Uterus (tissue), 4 donors: ENCODE measurements at regions of chr2 and their contacts with region 1.

Region 1: GRCh38 chr2:96760036-96760985 is at the start of gene CNNM4:
- DNase-seq: peak; percentile 93 to 94
- H3K4me3 ChIP-seq: peak within 1 kb of the TSS; percentile 50 to 63
- H3K27ac ChIP-seq: peak within 1 kb of the TSS; percentile 85 to 88
- H3K4me1 ChIP-seq: peaks cover 0 to 5% of the 10 kb centered on the region in 2 donors
- H3K27me3 ChIP-seq: no peaks in the 10 kb centered on the region
- CTCF ChIP-seq: peak in 1 of 4 experiments; percentile 32
- POLR2A ChIP-seq: peak; percentile 63 to 87
- total RNA-seq, gene CNNM4: 0.77 to 8.2 (median 4.7) TPM

Region 2: GRCh38 chr2:96816128-96816835 is 56.0 kb after region 1 on chr2 and contains the start of gene CNNM3:
- intact Hi-C with region 1: loop called (anchors 10 kb)
- DNase-seq: peak; percentile 95
- H3K4me3 ChIP-seq: peak within 1 kb of the TSS; percentile 59 to 93
- H3K27ac ChIP-seq: peak within 1 kb of the TSS; percentile 94 to 98
- H3K4me1 ChIP-seq: peaks cover 10 to 25% of the 10 kb centered on the region in 2 donors
- H3K27me3 ChIP-seq: no peaks in the 10 kb centered on the region
- CTCF ChIP-seq: peak; percentile 57 to 83 (median 71)
- POLR2A ChIP-seq: peak; percentile 77 to 89
- total RNA-seq, gene CNNM3: 1.5 to 21.1 (median 11.2) TPM

Region 3: DNA sequence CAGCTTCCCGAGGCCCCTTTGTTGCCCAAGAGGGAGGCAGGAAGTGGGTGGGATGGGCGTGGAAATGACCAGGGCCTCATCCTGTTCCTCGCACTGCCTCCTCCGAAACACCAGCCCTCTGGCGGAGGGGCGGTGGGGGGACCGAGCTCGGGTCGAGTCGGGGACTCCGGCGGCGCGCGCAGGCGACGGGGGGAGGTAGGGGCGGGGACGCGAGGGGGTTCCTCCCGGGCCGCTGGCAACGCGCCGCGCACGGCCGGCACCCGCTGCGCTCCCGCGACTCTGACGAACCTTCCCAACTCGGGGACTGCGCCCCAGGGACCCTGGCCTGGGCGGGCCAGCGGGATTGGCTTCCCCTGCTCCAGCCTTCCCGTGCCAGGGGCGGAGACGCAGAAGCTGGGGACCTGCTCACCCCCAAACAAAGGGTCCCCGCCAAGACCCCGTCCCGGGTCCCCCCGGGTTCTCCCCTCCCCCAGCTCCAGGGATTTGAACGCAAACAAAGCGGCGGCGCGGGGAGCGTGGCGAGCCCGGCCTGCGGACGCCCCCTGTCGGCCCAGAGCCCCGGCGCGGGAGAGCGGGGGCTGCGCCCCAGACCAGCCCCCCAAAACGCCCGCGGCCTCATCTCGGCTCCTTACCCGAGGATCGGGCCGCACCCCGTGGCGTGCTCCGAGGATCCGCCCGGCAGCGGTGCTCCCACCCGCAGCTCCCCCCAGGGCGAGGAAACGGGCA is 108.4 kb after region 1 on chr2:
- intact Hi-C with region 1: loop called (anchors 10 kb)
- DNase-seq: peak; percentile 87 to 91
- H3K4me3 ChIP-seq: peak overlapping the region; percentile 61 to 100
- H3K27ac ChIP-seq: peak overlapping the region; percentile 94 to 100
- H3K4me1 ChIP-seq: peaks cover 4 to 25% of the 10 kb centered on the region in 2 donors
- H3K27me3 ChIP-seq: no peaks in the 10 kb centered on the region
- CTCF ChIP-seq: peak; percentile 39 to 76 (median 56)
- POLR2A ChIP-seq: peak; percentile 8 to 49

Region 4: DNA sequence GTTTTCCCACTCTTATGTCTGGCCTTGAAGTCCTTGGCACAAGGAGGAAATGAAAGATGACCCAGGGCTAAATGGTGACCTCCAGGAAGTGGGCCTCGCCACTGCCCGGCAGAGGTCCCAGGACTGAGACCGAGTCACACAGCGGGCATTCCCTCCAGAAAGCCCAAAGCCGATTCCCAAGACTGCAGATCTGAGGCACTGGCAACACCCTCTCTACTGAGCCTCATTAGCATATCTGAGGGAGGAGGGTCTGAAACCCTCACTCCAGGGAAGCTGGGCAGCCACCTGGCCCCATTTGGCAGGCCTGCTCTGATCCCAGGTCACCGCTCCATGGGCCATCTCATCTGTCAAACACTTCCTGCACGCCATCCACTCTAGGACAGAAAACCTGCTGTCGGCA is 196.9 kb after region 1 on chr2:
- intact Hi-C with region 1: loop called (anchors 5 kb)
- DNase-seq: no peak
- H3K4me3 ChIP-seq: no peak overlapping the region
- H3K27ac ChIP-seq: no peak overlapping the region
- H3K4me1 ChIP-seq: peaks cover 12 to 20% of the 10 kb centered on the region in 2 donors
- H3K27me3 ChIP-seq: no peaks in the 10 kb centered on the region
- CTCF ChIP-seq: no peak
- POLR2A ChIP-seq: no peak